ENCODE measurements at regions of chr9 and their contacts with region 1.

Region 1: DNA sequence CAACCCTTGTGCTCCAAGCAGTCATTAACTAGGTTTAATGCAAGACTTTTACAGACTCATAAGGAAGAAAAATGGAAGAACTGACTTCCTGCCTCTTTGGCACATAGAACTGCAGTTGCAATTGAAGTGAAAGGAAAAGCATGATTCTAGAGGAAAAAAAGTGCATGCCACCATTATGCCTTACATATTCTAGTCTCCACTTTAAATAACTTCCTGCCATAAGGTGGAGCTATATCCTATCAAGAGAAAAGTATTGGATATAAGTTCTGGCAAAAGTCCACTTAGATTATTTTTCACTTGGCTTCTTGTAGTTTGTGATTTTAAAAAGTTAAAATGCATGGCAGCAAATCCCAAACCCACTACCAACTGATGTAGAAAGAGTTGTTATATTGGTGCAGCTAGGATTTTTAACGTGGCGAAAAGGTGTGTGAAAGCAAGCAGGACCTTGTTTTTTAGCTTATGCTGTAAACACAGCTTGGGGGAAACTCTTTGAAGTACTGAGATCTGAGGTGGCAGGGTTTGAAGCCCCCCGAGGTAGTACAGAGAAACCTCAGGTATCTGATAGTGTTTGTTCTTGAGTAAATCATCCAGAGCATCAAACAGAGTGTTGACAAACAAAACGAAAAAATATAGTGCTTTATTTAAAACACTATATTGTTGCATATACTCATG is 117.9 kb downstream of the ANXA1 start:
- DNase-seq: no peak
- ATAC-seq: no peak
- H3K4me3 ChIP-seq: peak overlapping the region in 1 of 12 donors; percentile 17
- H3K27ac ChIP-seq: no peak overlapping the region
- H3K4me1 ChIP-seq: no peaks in the 10 kb centered on the region
- H3K27me3 ChIP-seq: no peaks in the 10 kb centered on the region
- CTCF ChIP-seq: peak in 10 of 12 donors; percentile 11 to 45 (median 38)
- POLR2A ChIP-seq: no peak

Region 2: DNA sequence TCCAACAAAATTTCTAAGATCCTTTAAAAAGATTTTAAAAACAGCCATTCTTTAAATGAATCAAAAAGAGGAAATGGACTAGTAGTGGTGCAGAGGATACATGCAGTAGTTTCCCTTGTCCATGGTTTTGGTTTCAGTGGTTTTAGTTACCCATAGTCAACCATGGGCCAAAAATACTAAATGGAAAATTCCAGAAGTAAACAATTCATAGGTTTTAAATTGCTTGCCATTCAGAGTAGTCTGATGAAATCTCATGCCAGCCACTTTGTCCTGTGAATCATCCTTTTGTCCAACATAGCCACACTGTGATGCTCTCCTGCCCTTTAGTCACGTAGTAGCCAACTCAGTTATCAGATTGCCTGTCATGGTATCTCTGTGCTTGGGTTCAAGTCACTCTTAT is 168.2 kb after region 1 on chr9:
- intact Hi-C with region 1: loop called in 1 of 10 experiments (anchors 10 kb)
- DNase-seq: no peak
- ATAC-seq: no peak
- H3K4me3 ChIP-seq: no peak overlapping the region
- H3K27ac ChIP-seq: no peak overlapping the region
- H3K4me1 ChIP-seq: no peaks in the 10 kb centered on the region
- H3K27me3 ChIP-seq: no peaks in the 10 kb centered on the region
- CTCF ChIP-seq: no peak
- POLR2A ChIP-seq: no peak